ENCODE measurements at regions of chr10 and their contacts with region 1.

Region 1: GRCh38 chr10:100878291-100878910 is 34.4 kb upstream of the SLF2 start:
- DNase-seq: peak; percentile 82
- ATAC-seq: peak; percentile 96
- H3K4me3 ChIP-seq: no peak overlapping the region
- H3K27ac ChIP-seq: no peak overlapping the region
- H3K4me1 ChIP-seq: peaks cover 8 to 27% of the 10 kb centered on the region in 2 experiments
- H3K27me3 ChIP-seq: no peaks in the 10 kb centered on the region
- CTCF ChIP-seq: peak; percentile 90 to 98 (median 92)
- POLR2A ChIP-seq: no peak
- RAD21 ChIP-seq: peak; percentile 99

Region 2: DNA sequence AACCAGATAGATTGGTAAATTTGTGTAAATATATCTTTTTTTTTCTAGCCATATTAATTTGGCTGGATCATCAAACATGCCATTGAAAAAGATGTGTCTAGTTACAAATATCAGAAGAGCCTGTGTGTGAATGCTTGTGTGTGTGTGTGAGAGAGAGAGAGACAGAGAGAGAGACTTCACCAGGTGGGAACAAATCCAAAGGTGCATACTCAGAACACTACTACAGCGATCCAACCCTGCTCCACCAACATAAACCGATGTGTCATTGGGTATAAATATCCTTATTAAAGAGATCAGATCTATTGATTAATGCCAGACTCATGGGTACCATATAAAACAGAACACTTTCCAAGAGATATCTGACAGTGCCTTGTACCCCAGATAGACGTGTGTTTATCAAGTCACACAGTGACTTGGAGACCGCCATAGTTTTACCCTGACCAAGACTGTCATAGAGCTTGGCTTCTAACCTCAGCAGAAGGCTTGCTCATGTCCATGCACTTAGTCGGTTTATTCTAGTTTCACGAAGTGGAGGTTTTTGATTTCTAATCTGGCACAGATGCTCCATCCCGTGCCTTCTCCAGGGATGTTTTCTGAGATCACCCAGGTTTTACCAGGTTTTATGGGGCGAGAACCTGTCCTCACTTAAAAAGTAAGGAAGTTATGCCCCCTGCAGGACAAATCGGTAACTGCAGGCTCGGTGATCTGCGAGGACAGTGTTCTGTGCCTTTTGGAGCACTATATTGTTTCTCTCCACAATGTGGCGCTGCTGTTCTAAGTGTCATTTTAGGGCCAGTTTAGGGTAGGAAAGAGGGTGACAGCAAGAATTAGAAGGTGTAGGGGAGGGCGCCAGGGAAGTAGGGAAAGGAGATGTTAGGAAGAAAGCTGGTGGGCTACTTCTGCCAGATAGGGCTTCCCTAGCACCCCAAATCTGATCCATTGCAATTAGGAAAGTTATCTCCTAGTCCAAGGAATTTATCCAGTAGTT is 444.9 kb before region 1 on chr10:
- CTCF ChIA-PET with region 1: interaction called, 27 read pairs
- POLR2A ChIA-PET with region 1: no interaction called
- RAD21 ChIA-PET with region 1: interaction called in 1 of 2 experiments, 4 read pairs
- intact Hi-C with region 1: loop called (anchors 1 kb)
- DNase-seq: peak; percentile 97
- ATAC-seq: peak; percentile 96
- H3K4me3 ChIP-seq: no peak overlapping the region
- H3K27ac ChIP-seq: no peak overlapping the region
- H3K4me1 ChIP-seq: peaks cover 0 to 9% of the 10 kb centered on the region in 2 experiments; a peak in 2 of 4 replicates
- H3K27me3 ChIP-seq: no peaks in the 10 kb centered on the region
- CTCF ChIP-seq: peak; percentile 100
- POLR2A ChIP-seq: no peak
- RAD21 ChIP-seq: peak; percentile 100

Region 3: DNA sequence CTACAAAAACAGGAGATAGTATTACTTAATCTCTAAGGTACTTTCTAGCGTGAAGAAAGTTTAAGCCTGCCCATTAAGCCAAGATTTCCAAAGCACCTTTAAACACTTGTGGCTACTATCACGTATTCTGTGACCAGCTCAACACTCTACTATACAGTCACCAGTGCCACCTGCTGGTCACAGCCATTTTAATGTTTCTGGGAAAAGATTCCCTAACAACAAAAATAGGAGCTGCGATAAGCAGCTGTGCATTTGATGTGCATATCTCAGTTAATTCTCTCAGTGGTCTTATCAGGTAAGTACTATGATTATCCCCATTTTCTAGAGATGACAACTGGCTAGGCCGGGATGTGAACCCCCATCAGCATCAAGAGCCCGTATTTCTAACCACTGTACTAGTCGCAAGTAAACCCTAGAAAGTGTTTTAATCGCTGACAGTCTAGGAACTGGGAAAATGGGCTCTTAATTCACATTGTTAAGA is 359.6 kb before region 1 on chr10:
- CTCF ChIA-PET with region 1: interaction called, 54 read pairs
- POLR2A ChIA-PET with region 1: interaction called, 4 read pairs
- RAD21 ChIA-PET with region 1: interaction called, 6 to 7 read pairs
- intact Hi-C with region 1: loop called (anchors 1 kb)
- DNase-seq: peak; percentile 41
- ATAC-seq: peak; percentile 79
- H3K4me3 ChIP-seq: no peak overlapping the region
- H3K27ac ChIP-seq: no peak overlapping the region
- H3K4me1 ChIP-seq: no peaks in the 10 kb centered on the region
- H3K27me3 ChIP-seq: no peaks in the 10 kb centered on the region
- CTCF ChIP-seq: peak; percentile 83 to 89 (median 87)
- POLR2A ChIP-seq: no peak
- RAD21 ChIP-seq: peak; percentile 82

Region 4: GRCh38 chr10:100569618-100570473 is 308.6 kb before region 1 on chr10:
- CTCF ChIA-PET with region 1: interaction called, 182 read pairs
- POLR2A ChIA-PET with region 1: interaction called, 6 read pairs
- RAD21 ChIA-PET with region 1: interaction called, 8 to 10 read pairs
- intact Hi-C with region 1: no loop called
- DNase-seq: peak; percentile 37
- ATAC-seq: peak; percentile 87
- H3K4me3 ChIP-seq: peak overlapping the region; percentile 71 to 76
- H3K27ac ChIP-seq: peak overlapping the region; percentile 24; the same call in 1 of the 2 replicates
- H3K4me1 ChIP-seq: peaks cover 0 to 13% of the 10 kb centered on the region in 2 experiments; a peak in 2 of 4 replicates
- H3K27me3 ChIP-seq: no peaks in the 10 kb centered on the region
- CTCF ChIP-seq: peak; percentile 86 to 96 (median 95)
- POLR2A ChIP-seq: peak; percentile 55
- RAD21 ChIP-seq: peak; percentile 52

Region 5: GRCh38 chr10:100728928-100729861 is 149.2 kb before region 1 on chr10:
- CTCF ChIA-PET with region 1: interaction called, 20 read pairs
- POLR2A ChIA-PET with region 1: no interaction called
- RAD21 ChIA-PET with region 1: no interaction called
- intact Hi-C with region 1: loop called (anchors 5 kb)
- DNase-seq: peak; percentile 87
- ATAC-seq: peak; percentile 85
- H3K4me3 ChIP-seq: peak overlapping the region; percentile 52 to 62
- H3K27ac ChIP-seq: peak overlapping the region; percentile 37
- H3K4me1 ChIP-seq: peaks cover 32 to 37% of the 10 kb centered on the region in 2 experiments
- H3K27me3 ChIP-seq: no peaks in the 10 kb centered on the region
- CTCF ChIP-seq: peak; percentile 61 to 93 (median 82)
- POLR2A ChIP-seq: no peak
- RAD21 ChIP-seq: peak; percentile 78

Region 6: GRCh38 chr10:101012525-101013364 is 134.3 kb after region 1 on chr10:
- CTCF ChIA-PET with region 1: interaction called, 23 read pairs
- POLR2A ChIA-PET with region 1: no interaction called
- RAD21 ChIA-PET with region 1: interaction called, 3 to 4 read pairs
- intact Hi-C with region 1: loop called (anchors 5 kb)
- DNase-seq: peak; percentile 96
- ATAC-seq: peak; percentile 86
- H3K4me3 ChIP-seq: peak overlapping the region in 1 of 2 experiments; percentile 13; a peak in 1 of 4 replicates
- H3K27ac ChIP-seq: peak overlapping the region; percentile 39
- H3K4me1 ChIP-seq: peaks cover 31 to 69% of the 10 kb centered on the region in 2 experiments
- H3K27me3 ChIP-seq: no peaks in the 10 kb centered on the region
- CTCF ChIP-seq: peak in 2 of 3 experiments; percentile 88 to 99; a peak in 4 of 6 replicates
- POLR2A ChIP-seq: no peak
- RAD21 ChIP-seq: no peak